ENCODE measurements at regions of chr4 and their contacts with region 1.

Region 1: GRCh38 chr4:101596781-101597552 is 193.6 kb upstream of the BANK1 start:
- DNase-seq: peak in 4 of 5 donors; percentile 22 to 42 (median 33)
- H3K4me3 ChIP-seq: no peak overlapping the region
- H3K4me3 Mint-ChIP-seq: no peak overlapping the region
- H3K27ac ChIP-seq: no peak overlapping the region
- H3K27ac Mint-ChIP-seq: peak overlapping the region in 1 of 7 donors; percentile 4
- H3K4me1 ChIP-seq: no peaks in the 10 kb centered on the region
- H3K4me1 Mint-ChIP-seq: peaks cover 0 to 2% (median 0%) of the 10 kb centered on the region in 4 donors
- H3K27me3 ChIP-seq: no peaks in the 10 kb centered on the region
- H3K27me3 Mint-ChIP-seq: peaks cover 0 to 1% of the 10 kb centered on the region in 2 donors

Region 2: GRCh38 chr4:100421361-100421978 is 1175.5 kb before region 1 on chr4:
- CTCF ChIA-PET with region 1: no interaction called
- POLR2A ChIA-PET with region 1: no interaction called
- intact Hi-C with region 1: loop called (anchors 1 kb)
- DNase-seq: peak in 1 of 5 donors; percentile 1
- H3K4me3 ChIP-seq: no peak overlapping the region
- H3K4me3 Mint-ChIP-seq: no peak overlapping the region
- H3K27ac ChIP-seq: no peak overlapping the region
- H3K27ac Mint-ChIP-seq: no peak overlapping the region
- H3K4me1 ChIP-seq: no peaks in the 10 kb centered on the region
- H3K4me1 Mint-ChIP-seq: no peaks in the 10 kb centered on the region
- H3K27me3 ChIP-seq: no peaks in the 10 kb centered on the region
- H3K27me3 Mint-ChIP-seq: peaks cover 0 to 4% of the 10 kb centered on the region in 2 donors

Region 3: DNA sequence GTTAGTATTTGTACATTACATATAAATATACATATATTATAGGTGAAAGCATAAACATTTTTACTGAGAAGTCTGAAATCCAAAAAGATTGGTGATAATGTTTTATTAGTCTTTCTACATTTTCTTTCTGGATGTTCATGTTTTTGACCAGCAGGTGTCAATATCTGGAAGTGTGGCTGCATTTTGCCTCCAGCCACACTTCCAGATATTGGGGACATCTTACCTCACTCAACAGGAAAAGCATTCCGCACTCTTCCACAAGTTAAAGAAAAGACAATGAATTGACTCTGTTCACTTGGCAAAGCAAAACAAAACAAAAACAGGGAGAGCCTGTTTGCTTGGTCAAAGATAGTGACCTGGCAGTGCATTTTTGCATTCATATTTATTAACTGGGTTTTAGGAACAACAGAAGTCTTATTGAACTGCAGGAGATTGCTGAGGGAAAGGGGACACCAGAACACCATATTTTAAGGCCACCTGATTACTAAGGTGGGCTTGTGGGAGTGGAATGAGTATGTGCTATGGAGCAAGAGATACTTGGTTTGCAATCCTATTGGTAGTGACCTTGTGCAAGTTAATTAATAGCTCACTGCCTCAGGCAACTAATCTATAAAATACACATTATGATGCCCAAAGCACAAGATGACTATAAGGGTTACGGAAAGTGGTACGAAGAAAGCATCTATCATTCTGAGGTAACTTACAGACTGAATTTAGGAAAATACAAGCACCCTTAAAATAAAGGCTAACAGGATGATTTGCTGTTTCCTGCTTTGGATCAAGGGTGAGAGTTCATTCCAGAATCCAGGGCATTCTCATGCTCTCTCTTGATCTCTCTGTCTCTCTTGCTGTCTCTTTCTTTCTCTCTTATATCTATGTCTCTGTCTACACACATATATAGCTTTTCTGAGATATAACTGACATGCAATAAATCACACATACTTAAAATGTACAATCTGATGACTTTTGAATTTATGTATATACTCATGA is 689.2 kb before region 1 on chr4:
- CTCF ChIA-PET with region 1: no interaction called
- POLR2A ChIA-PET with region 1: no interaction called
- intact Hi-C with region 1: loop called (anchors 5 kb)
- DNase-seq: no peak
- H3K4me3 ChIP-seq: no peak overlapping the region
- H3K4me3 Mint-ChIP-seq: peak overlapping the region in 1 of 8 donors; percentile 21
- H3K27ac ChIP-seq: no peak overlapping the region
- H3K27ac Mint-ChIP-seq: peak overlapping the region in 2 of 7 donors; percentile 25 to 44
- H3K4me1 ChIP-seq: no peaks in the 10 kb centered on the region
- H3K4me1 Mint-ChIP-seq: peaks cover 0 to 3% (median 0%) of the 10 kb centered on the region in 4 donors
- H3K27me3 ChIP-seq: no peaks in the 10 kb centered on the region
- H3K27me3 Mint-ChIP-seq: no peaks in the 10 kb centered on the region

Region 4: GRCh38 chr4:101169044-101170014 is 427.6 kb before region 1 on chr4:
- CTCF ChIA-PET with region 1: interaction called, 8 read pairs
- POLR2A ChIA-PET with region 1: no interaction called
- intact Hi-C with region 1: loop called (anchors 1 kb)
- DNase-seq: peak; percentile 45 to 64 (median 54)
- H3K4me3 ChIP-seq: no peak overlapping the region
- H3K4me3 Mint-ChIP-seq: no peak overlapping the region
- H3K27ac ChIP-seq: no peak overlapping the region
- H3K27ac Mint-ChIP-seq: no peak overlapping the region
- H3K4me1 ChIP-seq: peaks cover 8% of the 10 kb centered on the region
- H3K4me1 Mint-ChIP-seq: peaks cover 4 to 13% (median 6%) of the 10 kb centered on the region in 4 donors
- H3K27me3 ChIP-seq: no peaks in the 10 kb centered on the region
- H3K27me3 Mint-ChIP-seq: no peaks in the 10 kb centered on the region

Region 5: DNA sequence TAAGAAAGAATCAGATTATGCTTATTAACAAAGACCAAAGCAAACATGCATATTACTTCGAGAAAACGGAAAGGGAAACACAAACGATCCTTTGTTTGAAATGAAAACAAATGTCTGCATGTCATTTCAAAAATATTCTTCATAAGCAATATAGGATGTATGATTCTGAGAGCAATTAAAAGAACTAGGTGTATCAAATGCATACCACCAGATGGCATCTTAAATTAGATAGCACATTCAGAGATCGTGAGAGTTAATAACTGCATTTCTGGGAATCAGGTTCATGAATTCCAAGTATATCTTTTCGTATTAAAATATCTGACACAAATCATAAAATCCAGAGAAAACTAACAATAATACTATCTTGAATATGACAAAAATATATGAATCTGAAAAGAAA is 409.1 kb before region 1 on chr4:
- CTCF ChIA-PET with region 1: no interaction called
- POLR2A ChIA-PET with region 1: no interaction called
- intact Hi-C with region 1: loop called (anchors 5 kb)
- DNase-seq: peak in 3 of 5 donors; percentile 8 to 14 (median 10)
- H3K4me3 ChIP-seq: no peak overlapping the region
- H3K4me3 Mint-ChIP-seq: peak overlapping the region in 4 of 8 donors; percentile 12 to 48 (median 22)
- H3K27ac ChIP-seq: no peak overlapping the region
- H3K27ac Mint-ChIP-seq: no peak overlapping the region
- H3K4me1 ChIP-seq: peaks cover 11% of the 10 kb centered on the region
- H3K4me1 Mint-ChIP-seq: peaks cover 24 to 53% (median 31%) of the 10 kb centered on the region in 4 donors
- H3K27me3 ChIP-seq: no peaks in the 10 kb centered on the region
- H3K27me3 Mint-ChIP-seq: no peaks in the 10 kb centered on the region

Region 6: DNA sequence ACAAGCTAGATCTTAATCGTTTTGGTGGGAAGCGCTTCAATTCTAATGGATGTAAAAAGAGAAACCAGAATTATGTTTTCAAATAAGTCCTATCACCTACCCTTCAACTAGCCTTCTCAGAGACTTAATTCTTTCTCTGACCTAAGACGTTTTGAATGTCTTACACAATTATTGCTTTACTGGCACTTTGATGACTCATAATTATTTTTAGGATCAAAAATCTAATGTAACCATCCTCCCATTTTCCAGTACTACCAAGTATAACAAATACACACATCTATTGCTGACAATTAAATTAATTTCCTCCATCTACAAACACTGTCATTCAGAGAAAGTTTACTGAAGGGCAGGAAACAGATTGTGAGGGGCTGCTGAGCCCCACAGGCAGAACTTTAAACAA is 358.3 kb before region 1 on chr4:
- CTCF ChIA-PET with region 1: no interaction called
- POLR2A ChIA-PET with region 1: no interaction called
- intact Hi-C with region 1: no loop called
- DNase-seq: no peak
- H3K4me3 ChIP-seq: no peak overlapping the region
- H3K4me3 Mint-ChIP-seq: no peak overlapping the region
- H3K27ac ChIP-seq: no peak overlapping the region
- H3K27ac Mint-ChIP-seq: no peak overlapping the region
- H3K4me1 ChIP-seq: no peaks in the 10 kb centered on the region
- H3K4me1 Mint-ChIP-seq: peaks cover 26 to 42% (median 32%) of the 10 kb centered on the region in 4 donors
- H3K27me3 ChIP-seq: no peaks in the 10 kb centered on the region
- H3K27me3 Mint-ChIP-seq: no peaks in the 10 kb centered on the region

Region 7: GRCh38 chr4:102263011-102263787 is 666.2 kb after region 1 on chr4:
- CTCF ChIA-PET with region 1: no interaction called
- POLR2A ChIA-PET with region 1: no interaction called
- intact Hi-C with region 1: loop called (anchors 5 kb)
- DNase-seq: peak in 4 of 5 donors; percentile 20 to 26 (median 23)
- H3K4me3 ChIP-seq: no peak overlapping the region
- H3K4me3 Mint-ChIP-seq: no peak overlapping the region
- H3K27ac ChIP-seq: no peak overlapping the region
- H3K27ac Mint-ChIP-seq: peak overlapping the region in 3 of 7 donors; percentile 7 to 77 (median 25)
- H3K4me1 ChIP-seq: no peaks in the 10 kb centered on the region
- H3K4me1 Mint-ChIP-seq: peaks cover 3 to 8% (median 4%) of the 10 kb centered on the region in 4 donors
- H3K27me3 ChIP-seq: no peaks in the 10 kb centered on the region
- H3K27me3 Mint-ChIP-seq: no peaks in the 10 kb centered on the region

Region 8: GRCh38 chr4:102610007-102610406 is 1013.0 kb after region 1 on chr4:
- CTCF ChIA-PET with region 1: no interaction called
- POLR2A ChIA-PET with region 1: no interaction called
- intact Hi-C with region 1: no loop called
- DNase-seq: no peak
- H3K4me3 ChIP-seq: no peak overlapping the region
- H3K4me3 Mint-ChIP-seq: peak overlapping the region in 5 of 8 donors; percentile 1 to 83 (median 44)
- H3K27ac ChIP-seq: no peak overlapping the region
- H3K27ac Mint-ChIP-seq: peak overlapping the region; percentile 18 to 99 (median 94)
- H3K4me1 ChIP-seq: peaks cover 84% of the 10 kb centered on the region
- H3K4me1 Mint-ChIP-seq: peaks cover 54 to 95% (median 76%) of the 10 kb centered on the region in 4 donors
- H3K27me3 ChIP-seq: no peaks in the 10 kb centered on the region
- H3K27me3 Mint-ChIP-seq: no peaks in the 10 kb centered on the region

Region 9: GRCh38 chr4:102945066-102945465 is 1348.1 kb after region 1 on chr4:
- CTCF ChIA-PET with region 1: no interaction called
- POLR2A ChIA-PET with region 1: no interaction called
- intact Hi-C with region 1: no loop called
- DNase-seq: no peak
- H3K4me3 ChIP-seq: no peak overlapping the region
- H3K4me3 Mint-ChIP-seq: no peak overlapping the region
- H3K27ac ChIP-seq: no peak overlapping the region
- H3K27ac Mint-ChIP-seq: no peak overlapping the region
- H3K4me1 ChIP-seq: no peaks in the 10 kb centered on the region
- H3K4me1 Mint-ChIP-seq: no peaks in the 10 kb centered on the region
- H3K27me3 ChIP-seq: no peaks in the 10 kb centered on the region
- H3K27me3 Mint-ChIP-seq: no peaks in the 10 kb centered on the region